ENCODE measurements at regions of chr15 and their contacts with region 1.

Region 1: GRCh38 chr15:60326824-60327654 is 70.7 kb downstream of the ANXA2 start:
- DNase-seq: peak; percentile 50
- ATAC-seq: no peak
- H3K4me3 ChIP-seq: no peak overlapping the region
- H3K27ac ChIP-seq: no peak overlapping the region
- H3K4me1 ChIP-seq: no peaks in the 10 kb centered on the region
- H3K27me3 ChIP-seq: peaks cover 2 to 32% of the 10 kb centered on the region in 2 experiments
- CTCF ChIP-seq: peak; percentile 78
- EP300 ChIP-seq: no peak
- POLR2A ChIP-seq: no peak
- RAD21 ChIP-seq: peak; percentile 75

Region 2: DNA sequence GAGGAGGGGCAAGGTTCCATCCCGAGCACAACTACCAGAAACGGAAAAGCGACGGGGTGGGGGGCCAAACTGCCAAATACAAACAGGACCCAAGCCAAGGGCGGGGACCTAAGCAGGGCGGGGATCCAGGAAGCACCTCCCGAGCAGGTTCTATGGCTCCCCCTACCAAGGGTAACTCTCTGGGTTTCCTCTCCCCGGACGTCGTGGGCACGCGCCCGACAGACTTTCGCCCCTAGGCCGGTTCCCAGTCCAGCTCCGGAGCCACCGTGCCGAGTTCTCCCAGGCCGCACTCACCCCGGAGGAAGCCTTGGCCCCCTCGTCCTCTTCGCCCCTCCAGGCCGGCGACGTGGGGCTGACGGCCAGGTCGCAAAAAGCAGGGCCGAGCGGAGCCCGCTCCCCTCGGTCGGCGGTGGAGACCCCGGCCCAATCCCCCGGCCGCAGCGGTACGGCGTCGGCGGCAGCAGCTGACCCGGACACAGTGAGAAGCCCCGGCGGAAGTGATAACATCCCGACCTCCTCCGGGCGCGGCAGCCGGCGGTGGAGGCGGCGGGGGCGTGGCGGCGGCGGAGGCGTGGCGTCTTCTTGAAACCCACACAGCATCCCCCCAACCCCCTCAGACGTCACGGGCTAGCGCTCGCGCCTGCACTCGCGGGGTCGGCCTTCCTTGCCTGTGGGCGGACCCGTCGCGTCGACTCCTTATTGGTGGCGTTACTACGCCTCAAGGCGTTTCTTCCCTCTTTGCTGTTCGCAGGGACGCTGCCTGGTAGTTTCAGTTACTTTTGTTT is 638.0 kb before region 1 on chr15 and contains the start of gene BNIP2:
- CTCF ChIA-PET with region 1: interaction called, 4 read pairs
- POLR2A ChIA-PET with region 1: no interaction called
- in situ Hi-C with region 1: no loop called
- intact Hi-C with region 1: loop called (anchors 2 kb)
- DNase-seq: peak; percentile 93
- ATAC-seq: peak; percentile 94
- H3K4me3 ChIP-seq: peak within 1 kb of the TSS; percentile 79 to 98 (median 94)
- H3K27ac ChIP-seq: peak within 1 kb of the TSS; percentile 98
- H3K4me1 ChIP-seq: peaks cover 53% of the 10 kb centered on the region
- H3K27me3 ChIP-seq: no peaks in the 10 kb centered on the region; a peak in 2 of 5 replicates
- CTCF ChIP-seq: peak; percentile 54
- EP300 ChIP-seq: no peak
- POLR2A ChIP-seq: peak; percentile 59 to 80
- RAD21 ChIP-seq: peak; percentile 34; the same call in 1 of the 2 replicates
- total RNA-seq, gene BNIP2: 55.1 and 57.6 TPM in 2 replicates

Region 3: DNA sequence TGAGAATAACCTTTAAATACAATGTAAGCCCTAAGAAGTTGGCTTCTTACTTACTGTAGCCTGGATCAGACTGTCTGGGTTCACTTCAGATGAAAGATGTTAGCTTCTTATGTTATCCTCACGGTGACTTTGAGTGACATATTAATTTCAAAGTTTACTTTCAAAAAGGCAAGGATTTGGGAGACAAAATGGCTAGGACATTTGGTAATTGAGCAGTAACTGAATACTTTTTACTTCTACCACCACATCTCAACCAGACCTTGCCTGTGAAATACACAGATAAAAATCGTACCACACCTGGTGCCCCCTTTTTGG is 601.9 kb before region 1 on chr15:
- CTCF ChIA-PET with region 1: interaction called, 12 read pairs
- POLR2A ChIA-PET with region 1: no interaction called
- in situ Hi-C with region 1: loop called (anchors 25 kb)
- intact Hi-C with region 1: loop called (anchors 2 kb)
- DNase-seq: no peak
- ATAC-seq: no peak
- H3K4me3 ChIP-seq: no peak overlapping the region
- H3K27ac ChIP-seq: no peak overlapping the region
- H3K4me1 ChIP-seq: no peaks in the 10 kb centered on the region
- H3K27me3 ChIP-seq: peaks cover 0 to 29% of the 10 kb centered on the region in 2 experiments; a peak in 3 of 5 replicates
- CTCF ChIP-seq: no peak
- EP300 ChIP-seq: no peak
- POLR2A ChIP-seq: no peak
- RAD21 ChIP-seq: no peak

Region 4: GRCh38 chr15:59917504-59918157 is 409.4 kb before region 1 on chr15:
- CTCF ChIA-PET with region 1: interaction called, 11 read pairs
- POLR2A ChIA-PET with region 1: no interaction called
- in situ Hi-C with region 1: no loop called
- intact Hi-C with region 1: loop called (anchors 1 kb)
- DNase-seq: peak; percentile 50
- ATAC-seq: peak; percentile 99
- H3K4me3 ChIP-seq: no peak overlapping the region
- H3K27ac ChIP-seq: no peak overlapping the region
- H3K4me1 ChIP-seq: no peaks in the 10 kb centered on the region
- H3K27me3 ChIP-seq: peaks cover 0 to 5% of the 10 kb centered on the region in 2 experiments; a peak in 1 of 5 replicates
- CTCF ChIP-seq: peak; percentile 83
- EP300 ChIP-seq: no peak
- POLR2A ChIP-seq: no peak
- RAD21 ChIP-seq: peak; percentile 53

Region 5: GRCh38 chr15:60212536-60212935 is 114.5 kb before region 1 on chr15:
- CTCF ChIA-PET with region 1: no interaction called
- POLR2A ChIA-PET with region 1: no interaction called
- in situ Hi-C with region 1: no loop called
- intact Hi-C with region 1: loop called (anchors 5 kb)
- DNase-seq: peak; percentile 7
- ATAC-seq: peak; percentile 36; the same call in 1 of the 3 replicates
- H3K4me3 ChIP-seq: no peak overlapping the region
- H3K27ac ChIP-seq: no peak overlapping the region
- H3K4me1 ChIP-seq: no peaks in the 10 kb centered on the region
- H3K27me3 ChIP-seq: no peaks in the 10 kb centered on the region
- CTCF ChIP-seq: 0 out of 2 replicates have a peak, but pooled peaks have one; percentile 13
- EP300 ChIP-seq: no peak
- POLR2A ChIP-seq: no peak
- RAD21 ChIP-seq: no peak

Measured in HepG2 (cell line).